ENCODE measurements at regions of chr12 and their contacts with region 1.

Region 1: GRCh38 chr12:14365294-14366208 is at the start of gene ATF7IP:
- DNase-seq: peak; percentile 98
- H3K4me3 ChIP-seq: peak within 1 kb of the TSS; percentile 68 to 81 (median 76)
- H3K27ac ChIP-seq: peak within 1 kb of the TSS; percentile 93 to 97 (median 95)
- H3K4me1 ChIP-seq: peaks cover 0 to 31% (median 26%) of the 10 kb centered on the region in 4 donors
- H3K27me3 ChIP-seq: no peaks in the 10 kb centered on the region
- CTCF ChIP-seq: peak; percentile 19 to 49 (median 31)
- EP300 ChIP-seq: no peak
- POLR2A ChIP-seq: no peak
- total RNA-seq, gene ATF7IP: 26.8 to 43.2 (median 32.8) TPM

Region 2: DNA sequence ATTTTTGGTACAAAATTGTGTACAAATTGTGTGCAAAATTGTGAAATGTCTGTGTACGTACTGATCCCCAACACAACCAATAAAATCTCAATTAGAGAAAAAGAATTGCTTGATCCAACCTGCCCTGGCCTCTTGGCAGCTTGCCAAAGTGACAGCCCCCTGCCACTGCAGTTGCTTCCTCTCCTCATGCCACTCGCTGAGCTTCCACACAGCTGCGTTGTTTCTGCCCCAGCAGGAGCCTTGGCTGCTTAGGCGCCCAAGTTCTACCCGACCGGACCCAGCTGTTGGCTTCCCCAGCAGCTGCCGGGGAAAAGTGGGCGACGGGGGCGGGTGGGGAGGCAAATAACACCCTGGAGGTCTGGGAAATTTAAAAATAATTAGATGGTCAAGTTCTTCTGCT is 171.9 kb before region 1 on chr12:
- intact Hi-C with region 1: no loop called
- DNase-seq: no peak
- H3K4me3 ChIP-seq: no peak overlapping the region
- H3K27ac ChIP-seq: no peak overlapping the region
- H3K4me1 ChIP-seq: no peaks in the 10 kb centered on the region
- H3K27me3 ChIP-seq: peaks cover 0 to 9% (median 0%) of the 10 kb centered on the region in 4 donors
- CTCF ChIP-seq: no peak
- EP300 ChIP-seq: no peak
- POLR2A ChIP-seq: no peak

Region 3: GRCh38 chr12:14257734-14258574 is 107.6 kb before region 1 on chr12:
- intact Hi-C with region 1: loop called (anchors 5 kb)
- DNase-seq: peak; percentile 96
- H3K4me3 ChIP-seq: peak overlapping the region; percentile 3 to 32 (median 23)
- H3K27ac ChIP-seq: peak overlapping the region; percentile 82 to 87 (median 86)
- H3K4me1 ChIP-seq: peaks cover 42 to 62% (median 54%) of the 10 kb centered on the region in 4 donors
- H3K27me3 ChIP-seq: no peaks in the 10 kb centered on the region
- CTCF ChIP-seq: no peak
- EP300 ChIP-seq: no peak
- POLR2A ChIP-seq: peak; percentile 59

Region 4: DNA sequence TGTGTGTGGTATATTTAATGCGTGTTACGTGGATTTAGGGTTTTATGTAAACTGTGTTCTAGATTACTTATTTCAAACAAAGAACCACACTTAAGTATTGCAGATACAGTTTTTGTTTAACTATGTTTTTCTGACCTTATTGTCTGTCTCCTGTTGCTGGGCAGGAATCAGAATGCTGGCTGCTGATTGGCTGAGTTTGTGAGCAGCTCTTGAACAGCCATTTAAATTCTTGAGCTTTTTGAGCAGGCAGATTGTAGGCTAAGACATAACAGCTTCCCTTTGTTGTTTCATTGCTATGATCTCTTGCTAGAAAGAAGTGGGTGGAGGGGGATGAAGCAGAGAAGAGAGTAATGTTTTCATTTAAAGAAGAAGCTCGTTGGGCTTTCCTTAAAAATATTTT is 52.2 kb after region 1 on chr12:
- intact Hi-C with region 1: loop called (anchors 10 kb)
- DNase-seq: no peak
- H3K4me3 ChIP-seq: peak overlapping the region in 3 of 4 donors; percentile 27 to 34 (median 33)
- H3K27ac ChIP-seq: peak overlapping the region in 3 of 4 donors; percentile 6 to 22 (median 8)
- H3K4me1 ChIP-seq: peaks cover 39 to 70% (median 51%) of the 10 kb centered on the region in 4 donors
- H3K27me3 ChIP-seq: no peaks in the 10 kb centered on the region
- CTCF ChIP-seq: no peak
- EP300 ChIP-seq: no peak
- POLR2A ChIP-seq: no peak

Region 5: DNA sequence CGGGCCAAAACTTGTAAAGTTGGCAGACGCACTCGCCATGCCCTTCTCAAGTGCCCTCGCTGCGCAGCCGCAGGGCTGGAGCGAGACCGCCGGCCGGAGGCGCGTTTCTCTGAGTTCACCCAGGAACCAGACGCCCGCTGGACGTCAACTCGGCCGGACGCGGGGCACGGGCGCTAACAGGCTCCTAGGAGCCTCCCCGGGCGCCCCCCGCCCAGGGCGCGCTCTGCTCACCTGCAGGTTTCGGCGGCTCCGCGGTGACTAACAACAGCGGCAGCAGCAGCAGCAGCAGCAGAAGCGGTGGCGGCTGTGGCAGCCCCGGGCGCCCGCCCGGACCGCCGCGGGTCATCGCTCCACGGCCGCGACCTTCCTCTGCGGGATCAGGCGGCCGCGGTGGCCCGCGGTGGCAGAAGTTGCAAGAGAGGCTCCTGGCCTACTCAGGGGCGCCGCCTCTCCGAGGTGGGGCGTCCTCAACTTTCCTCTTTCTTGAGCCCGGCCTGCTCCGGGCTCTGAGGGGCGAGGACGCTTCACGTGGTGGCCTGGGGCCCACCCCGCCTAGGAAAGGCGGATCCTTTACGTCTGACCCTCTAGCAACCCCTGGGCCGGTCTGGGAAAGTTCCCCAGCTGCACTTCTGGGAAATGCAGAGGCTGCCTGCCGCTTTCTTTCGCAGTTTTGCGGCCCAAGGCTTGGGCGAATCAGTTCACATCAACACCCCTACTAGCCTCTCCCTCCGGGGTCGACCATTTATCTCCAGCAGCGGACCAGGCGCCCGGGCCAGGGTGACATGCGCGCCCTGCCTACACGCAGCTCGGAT is 202.0 kb after region 1 on chr12 and contains the start of gene PLBD1:
- intact Hi-C with region 1: loop called (anchors 5 kb)
- DNase-seq: no peak
- H3K4me3 ChIP-seq: peak within 1 kb of the TSS; percentile 65 to 74 (median 67)
- H3K27ac ChIP-seq: peak within 1 kb of the TSS; percentile 56 to 77 (median 72)
- H3K4me1 ChIP-seq: peaks cover 0 to 21% (median 14%) of the 10 kb centered on the region in 4 donors
- H3K27me3 ChIP-seq: no peaks in the 10 kb centered on the region
- CTCF ChIP-seq: no peak
- EP300 ChIP-seq: no peak
- POLR2A ChIP-seq: peak; percentile 36
- total RNA-seq, gene PLBD1: 4.1 to 18.7 (median 6.6) TPM

Region 6: GRCh38 chr12:14678547-14679150 is 313.1 kb after region 1 on chr12:
- intact Hi-C with region 1: no loop called
- DNase-seq: no peak
- H3K4me3 ChIP-seq: no peak overlapping the region
- H3K27ac ChIP-seq: no peak overlapping the region
- H3K4me1 ChIP-seq: no peaks in the 10 kb centered on the region
- H3K27me3 ChIP-seq: no peaks in the 10 kb centered on the region
- CTCF ChIP-seq: no peak
- EP300 ChIP-seq: no peak
- POLR2A ChIP-seq: no peak

Region 7: DNA sequence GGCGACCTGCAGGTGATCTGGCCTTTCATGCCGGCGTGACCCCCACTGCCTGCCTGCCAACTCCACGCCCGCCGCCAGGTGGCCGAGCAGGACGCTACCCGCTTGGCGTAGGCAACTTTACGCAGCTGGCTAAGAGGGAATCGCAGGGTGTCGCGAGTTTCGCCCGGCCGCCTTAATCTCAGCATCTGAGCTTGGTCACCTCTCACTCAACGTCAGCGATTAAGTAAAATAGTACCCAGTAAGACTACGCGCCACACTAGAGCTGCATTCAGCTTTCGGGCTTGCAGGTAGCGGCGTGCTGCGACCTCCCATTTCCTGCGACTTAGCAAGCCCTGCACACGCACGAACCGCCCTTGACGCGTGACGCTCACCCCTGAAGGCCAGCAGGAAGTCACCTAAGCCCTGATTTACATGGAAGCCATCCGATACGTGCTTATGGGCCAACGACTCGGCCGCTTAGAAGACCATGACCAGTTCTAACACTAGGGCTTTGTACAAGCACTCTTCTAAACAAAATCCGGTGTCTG is 404.5 kb after region 1 on chr12:
- intact Hi-C with region 1: loop called (anchors 10 kb)
- DNase-seq: peak; percentile 95
- H3K4me3 ChIP-seq: peak overlapping the region; percentile 74 to 85 (median 80)
- H3K27ac ChIP-seq: peak overlapping the region; percentile 93 to 98 (median 94)
- H3K4me1 ChIP-seq: peaks cover 5 to 42% (median 38%) of the 10 kb centered on the region in 4 donors
- H3K27me3 ChIP-seq: no peaks in the 10 kb centered on the region
- CTCF ChIP-seq: peak; percentile 77 to 85 (median 84)
- EP300 ChIP-seq: no peak
- POLR2A ChIP-seq: no peak